BJ (cell line): ENCODE measurements at regions of chr18 and their contacts with region 1.

Region 1: DNA sequence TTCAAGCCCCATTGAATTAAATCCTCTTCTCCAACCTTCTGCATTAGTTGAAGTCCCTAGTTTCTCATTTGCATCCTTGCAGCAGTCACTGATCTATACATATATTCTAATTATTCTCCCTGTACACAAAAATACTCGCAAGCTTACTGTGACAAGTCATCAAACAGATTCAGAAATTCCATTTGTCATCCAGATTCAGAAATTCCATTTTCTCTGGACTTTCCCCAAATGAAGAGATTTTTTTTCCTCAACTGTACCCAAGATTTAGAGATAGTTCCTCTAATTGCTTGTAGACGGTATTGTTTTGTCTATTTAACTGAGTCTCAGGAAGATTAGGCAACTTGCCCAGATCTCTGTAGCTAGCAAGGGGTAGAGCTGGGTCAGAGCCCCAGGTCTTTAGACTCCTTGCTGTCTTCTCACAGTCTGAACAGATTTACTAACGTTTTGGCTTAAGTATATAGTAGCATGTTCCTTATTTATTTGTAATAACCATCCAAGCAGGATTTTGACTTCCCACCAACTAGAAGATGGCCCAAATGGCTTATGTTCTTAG is 34.2 kb downstream of the RAB12 start:
- DNase-seq: no peak
- H3K4me3 ChIP-seq: no peak overlapping the region
- H3K27me3 ChIP-seq: no peaks in the 10 kb centered on the region
- CTCF ChIP-seq: no peak

Region 2: GRCh38 chr18:8654503-8655451 is 11.4 kb after region 1 on chr18:
- CTCF ChIA-PET with region 1: interaction called, 49 read pairs
- POLR2A ChIA-PET with region 1: no interaction called
- DNase-seq: no peak
- H3K4me3 ChIP-seq: no peak overlapping the region
- H3K27me3 ChIP-seq: 0 out of 2 replicates have a peak, but pooled peaks cover 1% of the 10 kb centered on the region
- CTCF ChIP-seq: peak; percentile 62